ENCODE measurements at regions of chr7 and their contacts with region 1.

Region 1: DNA sequence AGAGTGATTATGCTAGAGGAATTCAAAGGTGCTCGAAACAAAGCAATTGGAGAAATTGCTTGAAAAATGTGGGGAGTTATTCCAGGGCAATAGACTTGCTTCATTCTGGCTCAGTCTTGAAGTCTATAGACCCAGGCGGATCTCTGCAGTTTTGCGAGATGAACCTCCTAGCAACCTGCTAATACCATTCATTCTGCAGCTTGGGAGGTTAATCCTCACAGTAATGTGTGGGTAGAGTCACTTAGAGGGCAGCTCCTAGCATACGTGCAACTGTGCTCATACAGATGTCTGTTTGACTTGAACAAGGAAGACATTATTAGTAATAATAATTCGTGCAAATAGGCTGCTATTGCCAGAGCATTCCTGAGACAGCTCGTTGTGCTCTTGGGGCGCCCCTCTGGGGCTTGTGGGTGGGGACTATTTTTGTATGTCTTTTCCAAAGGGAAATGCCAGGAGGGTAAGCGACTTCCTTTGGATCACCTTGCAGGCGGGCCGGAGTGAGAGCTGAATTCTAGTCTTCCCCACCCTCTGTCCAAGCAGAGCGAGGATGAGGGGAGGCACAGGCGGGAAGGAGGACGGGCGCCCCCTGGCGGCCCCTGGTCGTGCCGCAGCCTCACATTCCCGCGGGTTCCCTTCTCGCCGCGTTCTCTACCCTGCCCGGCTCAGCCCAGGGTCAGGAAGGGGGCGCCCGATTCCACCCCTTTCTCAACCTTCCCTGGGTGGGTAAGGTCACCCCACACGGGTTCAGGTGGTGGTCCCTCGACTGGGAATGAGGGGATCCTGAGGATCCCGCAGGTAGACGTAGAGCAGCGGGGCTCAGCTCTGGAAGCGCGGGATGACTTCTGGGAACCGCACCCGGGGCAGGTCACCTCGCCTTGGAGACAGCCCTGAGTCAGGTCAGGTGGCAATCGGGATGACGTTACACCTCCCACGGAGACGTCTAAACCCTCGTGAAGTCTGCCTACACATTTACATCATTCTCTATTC is 241.5 kb downstream of the PHTF2 start:
- DNase-seq: peak; percentile 27 to 64
- ATAC-seq: peak; percentile 38 to 72 (median 53)
- H3K4me3 ChIP-seq: no peak overlapping the region
- H3K4me3 Mint-ChIP-seq: no peak overlapping the region
- H3K27ac ChIP-seq: no peak overlapping the region
- H3K27ac Mint-ChIP-seq: no peak overlapping the region
- H3K4me1 ChIP-seq: peaks cover 2% of the 10 kb centered on the region
- H3K4me1 Mint-ChIP-seq: no peaks in the 10 kb centered on the region
- H3K27me3 ChIP-seq: no peaks in the 10 kb centered on the region
- H3K27me3 Mint-ChIP-seq: peaks cover 16 to 20% of the 10 kb centered on the region in 2 donors
- CTCF ChIP-seq: peak; percentile 87

Region 2: DNA sequence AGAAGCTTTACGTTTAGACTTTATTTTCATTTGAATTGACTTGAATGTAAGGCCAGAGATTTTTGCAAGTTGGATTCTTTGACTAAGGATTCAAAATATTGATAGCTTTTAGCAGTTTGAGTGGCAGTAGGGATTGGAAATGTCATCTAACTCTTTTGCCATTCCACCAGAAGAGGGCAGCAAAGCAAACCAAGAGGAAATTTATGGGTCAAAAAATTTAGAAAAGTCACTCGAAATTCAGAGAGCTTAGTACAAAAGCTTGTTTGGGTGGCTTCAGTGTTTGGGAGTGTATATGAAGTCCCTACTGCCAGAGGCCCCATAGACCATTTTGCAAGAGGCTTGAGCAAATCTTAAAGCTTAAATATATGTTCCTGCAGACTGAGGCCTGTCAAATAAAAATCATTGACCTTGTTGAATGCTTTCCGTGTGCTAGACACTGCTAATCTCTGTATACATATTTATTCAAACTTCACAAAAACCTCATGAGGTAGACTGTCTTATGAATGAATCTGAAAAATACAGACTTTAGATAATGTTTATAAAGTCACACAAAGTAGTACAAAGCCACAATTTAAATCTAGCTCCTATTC is 388.4 kb before region 1 on chr7:
- intact Hi-C with region 1: loop called (anchors 5 kb)
- DNase-seq: peak in 1 of 2 donors; percentile 71
- ATAC-seq: peak in 2 of 3 donors; percentile 38 to 44
- H3K4me3 ChIP-seq: no peak overlapping the region
- H3K4me3 Mint-ChIP-seq: no peak overlapping the region
- H3K27ac ChIP-seq: no peak overlapping the region
- H3K27ac Mint-ChIP-seq: peak overlapping the region; percentile 27 to 69
- H3K4me1 ChIP-seq: no peaks in the 10 kb centered on the region
- H3K4me1 Mint-ChIP-seq: peaks cover 0 to 6% of the 10 kb centered on the region in 2 donors
- H3K27me3 ChIP-seq: no peaks in the 10 kb centered on the region
- H3K27me3 Mint-ChIP-seq: no peaks in the 10 kb centered on the region
- CTCF ChIP-seq: peak; percentile 74

Region 3: DNA sequence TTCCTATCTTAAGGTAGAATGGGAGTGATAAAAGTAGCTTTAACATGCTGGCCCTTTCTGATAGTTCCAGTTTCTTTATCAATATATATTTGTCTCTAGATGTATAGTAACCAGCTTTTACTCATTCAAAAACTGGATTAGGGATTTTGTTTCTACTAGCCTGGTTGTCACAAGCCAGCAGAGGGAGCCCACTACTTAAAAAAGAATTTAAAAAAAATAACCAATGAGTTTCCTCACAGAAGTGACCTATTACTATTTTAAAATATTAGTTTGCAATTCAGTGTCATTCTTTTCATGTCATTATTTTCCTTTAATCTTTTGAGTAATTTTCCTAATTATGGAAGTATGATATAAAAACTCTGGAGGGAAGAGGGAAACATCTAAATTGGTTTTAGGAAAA is 99.4 kb before region 1 on chr7:
- intact Hi-C with region 1: loop called (anchors 2 kb)
- DNase-seq: peak in 1 of 2 donors; percentile 13
- ATAC-seq: no peak
- H3K4me3 ChIP-seq: no peak overlapping the region
- H3K4me3 Mint-ChIP-seq: no peak overlapping the region
- H3K27ac ChIP-seq: no peak overlapping the region
- H3K27ac Mint-ChIP-seq: no peak overlapping the region
- H3K4me1 ChIP-seq: no peaks in the 10 kb centered on the region
- H3K4me1 Mint-ChIP-seq: peaks cover 2 to 3% of the 10 kb centered on the region in 2 donors
- H3K27me3 ChIP-seq: no peaks in the 10 kb centered on the region
- H3K27me3 Mint-ChIP-seq: no peaks in the 10 kb centered on the region
- CTCF ChIP-seq: peak; percentile 24

Measured in natural killer cell (primary cell).